IMR-90 (cell line): ENCODE measurements at regions of chr15 and their contacts with region 1.

Region 1: GRCh38 chr15:52735231-52736089 is 54.7 kb downstream of the ONECUT1 start:
- DNase-seq: peak; percentile 71
- ATAC-seq: peak; percentile 89
- H3K4me3 ChIP-seq: no peak overlapping the region
- H3K27ac ChIP-seq: no peak overlapping the region
- H3K4me1 ChIP-seq: no peaks in the 10 kb centered on the region
- H3K27me3 ChIP-seq: no peaks in the 10 kb centered on the region; the same call in 1 of the 2 replicates
- CTCF ChIP-seq: peak; percentile 84
- POLR2A ChIP-seq: no peak
- RAD21 ChIP-seq: peak; percentile 94

Region 2: DNA sequence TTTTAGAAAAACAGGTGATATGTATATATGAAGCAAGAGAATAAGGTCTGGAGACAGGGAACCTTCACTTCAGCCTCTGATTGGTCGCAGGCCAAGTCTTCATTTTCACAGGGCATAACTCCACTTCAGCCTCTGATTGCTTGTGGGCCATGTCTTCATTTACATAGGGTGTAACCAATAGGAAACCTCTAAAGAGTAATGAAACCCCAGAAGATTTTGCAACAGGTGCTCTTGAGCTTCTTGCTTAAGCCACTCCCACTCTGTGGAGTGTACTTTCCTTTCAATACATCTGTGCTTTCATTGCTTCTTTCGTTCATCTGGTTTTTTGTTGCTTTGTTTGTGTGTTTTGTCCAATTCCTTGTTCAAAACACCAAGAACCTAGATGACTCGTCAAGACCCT is 1076.8 kb before region 1 on chr15:
- CTCF ChIA-PET with region 1: no interaction called
- POLR2A ChIA-PET with region 1: no interaction called
- dilution Hi-C with region 1: no loop called
- in situ Hi-C with region 1: no loop called
- intact Hi-C with region 1: no loop called
- DNase-seq: no peak
- ATAC-seq: no peak
- H3K4me3 ChIP-seq: no peak overlapping the region
- H3K27ac ChIP-seq: no peak overlapping the region
- H3K4me1 ChIP-seq: no peaks in the 10 kb centered on the region
- H3K27me3 ChIP-seq: peaks cover 2% of the 10 kb centered on the region; the same call in 1 of the 2 replicates
- CTCF ChIP-seq: no peak
- POLR2A ChIP-seq: no peak
- RAD21 ChIP-seq: no peak

Region 3: DNA sequence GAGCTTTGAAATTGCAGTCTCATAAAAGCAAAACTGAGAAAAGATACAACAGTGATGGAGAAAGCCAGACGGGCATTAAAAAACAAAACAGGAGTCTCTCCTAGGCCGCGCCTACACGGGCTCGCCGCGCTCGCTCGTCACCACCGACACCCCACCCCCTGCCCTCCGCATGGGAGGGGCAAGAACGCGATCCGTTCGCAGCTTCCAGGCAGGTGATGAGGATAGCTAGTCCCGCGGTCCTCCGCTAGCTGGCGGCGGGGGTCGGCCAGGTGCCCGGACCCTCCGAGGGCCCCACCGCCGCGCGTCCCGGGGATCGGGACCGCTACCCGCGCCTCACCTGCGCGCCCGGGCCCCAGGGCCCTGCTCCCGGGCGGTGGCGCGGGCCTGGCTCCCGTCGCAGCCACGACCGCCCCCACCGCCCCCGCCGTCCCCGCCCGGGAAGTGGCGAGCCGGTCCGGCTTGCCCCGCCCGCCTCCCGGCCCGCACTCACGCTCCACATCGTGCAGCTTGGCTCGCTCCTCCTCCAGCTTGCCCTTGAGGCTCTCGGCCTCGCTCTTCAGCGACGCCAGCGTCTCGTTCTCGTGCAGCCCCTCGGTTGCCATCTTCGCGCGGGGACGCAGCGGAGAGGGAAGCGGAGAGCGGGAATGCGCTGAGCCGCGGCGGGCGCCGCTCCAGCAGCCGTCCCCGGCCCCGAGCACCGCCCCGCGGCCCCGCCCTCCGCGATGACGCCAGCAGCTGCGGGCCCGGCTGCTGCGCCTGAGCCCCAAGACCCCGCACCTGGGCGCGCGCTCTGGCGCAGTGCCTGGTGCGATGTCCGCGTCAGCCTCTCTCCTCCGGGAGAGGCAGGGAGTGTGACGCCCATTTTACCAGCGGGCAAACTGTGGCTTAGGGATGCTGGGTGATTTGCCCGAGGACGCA is 555.9 kb before region 1 on chr15:
- CTCF ChIA-PET with region 1: no interaction called
- POLR2A ChIA-PET with region 1: no interaction called
- dilution Hi-C with region 1: no loop called
- in situ Hi-C with region 1: no loop called
- intact Hi-C with region 1: loop called (anchors 5 kb)
- DNase-seq: peak; percentile 70
- ATAC-seq: peak; percentile 91
- H3K4me3 ChIP-seq: peak overlapping the region; percentile 97
- H3K27ac ChIP-seq: peak overlapping the region; percentile 92
- H3K4me1 ChIP-seq: peaks cover 2% of the 10 kb centered on the region; the same call in 1 of the 2 replicates
- H3K27me3 ChIP-seq: no peaks in the 10 kb centered on the region; the same call in 1 of the 2 replicates
- CTCF ChIP-seq: no peak
- POLR2A ChIP-seq: peak; percentile 60; the same call in 1 of the 2 replicates
- RAD21 ChIP-seq: no peak

Region 4: GRCh38 chr15:52256366-52256765 is 479.1 kb before region 1 on chr15:
- CTCF ChIA-PET with region 1: interaction called, 3 read pairs
- POLR2A ChIA-PET with region 1: no interaction called
- dilution Hi-C with region 1: no loop called
- in situ Hi-C with region 1: no loop called
- intact Hi-C with region 1: loop called (anchors 1 kb)
- DNase-seq: peak; percentile 80
- ATAC-seq: peak; percentile 64
- H3K4me3 ChIP-seq: no peak overlapping the region; the same call in 1 of the 2 replicates
- H3K27ac ChIP-seq: no peak overlapping the region
- H3K4me1 ChIP-seq: peaks cover 10% of the 10 kb centered on the region
- H3K27me3 ChIP-seq: no peaks in the 10 kb centered on the region
- CTCF ChIP-seq: peak; percentile 82
- POLR2A ChIP-seq: no peak
- RAD21 ChIP-seq: peak; percentile 91

Region 5: DNA sequence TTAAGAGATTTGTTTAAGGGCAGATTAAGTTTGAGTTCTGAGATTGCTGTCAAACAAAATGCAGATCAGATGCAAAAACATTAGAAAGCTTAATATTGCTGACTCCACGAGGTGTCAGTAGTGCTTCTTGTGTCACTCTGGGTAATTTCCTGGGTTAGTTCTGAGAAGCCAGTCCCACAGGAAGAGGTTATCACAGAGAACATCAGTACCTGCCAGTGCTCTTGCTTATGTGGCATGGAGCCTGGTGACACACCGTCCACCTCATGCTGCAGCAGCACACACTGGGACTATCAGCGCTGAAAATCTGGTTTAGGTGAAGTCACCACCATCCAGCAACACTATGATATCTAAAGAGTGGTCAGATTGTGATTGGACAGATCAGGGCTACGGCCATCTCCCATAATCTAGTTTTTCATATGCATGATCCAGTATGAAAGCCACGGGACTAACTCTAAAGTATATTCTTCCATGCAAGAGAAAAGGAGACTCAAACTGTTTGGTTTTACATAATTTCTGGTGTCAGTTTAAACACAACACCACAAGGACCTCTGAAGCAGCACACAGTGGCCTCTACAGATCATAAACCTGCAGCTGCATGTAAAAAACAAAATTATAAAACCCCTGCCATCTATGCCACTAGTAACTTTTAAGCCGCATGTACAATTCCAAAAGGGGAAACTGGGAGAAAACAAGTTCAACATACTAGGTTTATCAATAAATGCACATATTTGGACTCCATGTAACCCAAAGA is 403.8 kb before region 1 on chr15:
- CTCF ChIA-PET with region 1: interaction called, 3 read pairs
- POLR2A ChIA-PET with region 1: no interaction called
- dilution Hi-C with region 1: no loop called
- in situ Hi-C with region 1: loop called (anchors 10 kb)
- intact Hi-C with region 1: loop called (anchors 5 kb)
- DNase-seq: peak; percentile 54
- ATAC-seq: peak; percentile 47; the same call in 1 of the 2 replicates
- H3K4me3 ChIP-seq: no peak overlapping the region
- H3K27ac ChIP-seq: no peak overlapping the region
- H3K4me1 ChIP-seq: peaks cover 4% of the 10 kb centered on the region; the same call in 1 of the 2 replicates
- H3K27me3 ChIP-seq: no peaks in the 10 kb centered on the region
- CTCF ChIP-seq: peak; percentile 51
- POLR2A ChIP-seq: no peak
- RAD21 ChIP-seq: peak; percentile 63

Region 6: GRCh38 chr15:52528991-52529926 is 206.2 kb before region 1 on chr15:
- CTCF ChIA-PET with region 1: no interaction called
- POLR2A ChIA-PET with region 1: no interaction called
- dilution Hi-C with region 1: no loop called
- in situ Hi-C with region 1: no loop called
- intact Hi-C with region 1: loop called (anchors 5 kb)
- DNase-seq: peak; percentile 71
- ATAC-seq: peak; percentile 87
- H3K4me3 ChIP-seq: peak overlapping the region; percentile 75
- H3K27ac ChIP-seq: peak overlapping the region; percentile 25
- H3K4me1 ChIP-seq: 0 out of 2 replicates have a peak, but pooled peaks cover 3% of the 10 kb centered on the region
- H3K27me3 ChIP-seq: peaks cover 8% of the 10 kb centered on the region
- CTCF ChIP-seq: 0 out of 2 replicates have a peak, but pooled peaks have one; percentile 15
- POLR2A ChIP-seq: no peak
- RAD21 ChIP-seq: peak; percentile 40

Region 7: GRCh38 chr15:52568601-52569256 is 166.7 kb before region 1 on chr15 and contains the start of gene ARPP19:
- CTCF ChIA-PET with region 1: no interaction called
- POLR2A ChIA-PET with region 1: no interaction called
- dilution Hi-C with region 1: no loop called
- in situ Hi-C with region 1: no loop called
- intact Hi-C with region 1: loop called (anchors 10 kb)
- DNase-seq: peak; percentile 86
- ATAC-seq: peak; percentile 88
- H3K4me3 ChIP-seq: peak within 1 kb of the TSS; percentile 91
- H3K27ac ChIP-seq: peak within 1 kb of the TSS; percentile 35
- H3K4me1 ChIP-seq: peaks cover 5% of the 10 kb centered on the region
- H3K27me3 ChIP-seq: no peaks in the 10 kb centered on the region
- CTCF ChIP-seq: 0 out of 2 replicates have a peak, but pooled peaks have one; percentile 22
- POLR2A ChIP-seq: peak; percentile 62; the same call in 1 of the 2 replicates
- RAD21 ChIP-seq: peak; percentile 32
- total RNA-seq, gene ARPP19: 65.2 and 118 TPM in 2 replicates

Region 8: GRCh38 chr15:52679232-52680040 is 56.0 kb before region 1 on chr15 and contains the start of gene ATOSA:
- CTCF ChIA-PET with region 1: no interaction called
- POLR2A ChIA-PET with region 1: no interaction called
- dilution Hi-C with region 1: no loop called
- in situ Hi-C with region 1: no loop called
- intact Hi-C with region 1: loop called (anchors 2 kb)
- DNase-seq: peak; percentile 84
- ATAC-seq: peak; percentile 84
- H3K4me3 ChIP-seq: peak within 1 kb of the TSS; percentile 94
- H3K27ac ChIP-seq: peak within 1 kb of the TSS; percentile 69
- H3K4me1 ChIP-seq: no peaks in the 10 kb centered on the region
- H3K27me3 ChIP-seq: peaks cover 2% of the 10 kb centered on the region
- CTCF ChIP-seq: 0 out of 2 replicates have a peak, but pooled peaks have one; percentile 7
- POLR2A ChIP-seq: no peak
- RAD21 ChIP-seq: no peak
- total RNA-seq, gene ATOSA: 17.2 and 23.9 TPM in 2 replicates

Region 9: GRCh38 chr15:52857471-52857870 is 122.0 kb after region 1 on chr15:
- CTCF ChIA-PET with region 1: no interaction called
- POLR2A ChIA-PET with region 1: no interaction called
- dilution Hi-C with region 1: no loop called
- in situ Hi-C with region 1: no loop called
- intact Hi-C with region 1: no loop called
- DNase-seq: no peak
- ATAC-seq: no peak
- H3K4me3 ChIP-seq: no peak overlapping the region
- H3K27ac ChIP-seq: no peak overlapping the region
- H3K4me1 ChIP-seq: no peaks in the 10 kb centered on the region
- H3K27me3 ChIP-seq: no peaks in the 10 kb centered on the region
- CTCF ChIP-seq: no peak
- POLR2A ChIP-seq: no peak
- RAD21 ChIP-seq: no peak

Region 10: GRCh38 chr15:53580366-53580765 is 844.9 kb after region 1 on chr15:
- CTCF ChIA-PET with region 1: no interaction called
- POLR2A ChIA-PET with region 1: no interaction called
- dilution Hi-C with region 1: no loop called
- in situ Hi-C with region 1: no loop called
- intact Hi-C with region 1: no loop called
- DNase-seq: no peak
- ATAC-seq: no peak
- H3K4me3 ChIP-seq: no peak overlapping the region
- H3K27ac ChIP-seq: no peak overlapping the region
- H3K4me1 ChIP-seq: no peaks in the 10 kb centered on the region
- H3K27me3 ChIP-seq: no peaks in the 10 kb centered on the region
- CTCF ChIP-seq: no peak
- POLR2A ChIP-seq: no peak
- RAD21 ChIP-seq: no peak